Motor neuron (in vitro differentiated cells): ENCODE measurements at regions of chrX and their contacts with region 1.

Region 1: GRCh38 chrX:12894074-12895030 is 12.1 kb upstream of the TLR8 start:
- ATAC-seq: peak in 2 of 8 experiments; percentile 36 to 69
- H3K4me3 ChIP-seq: no peak overlapping the region
- H3K27ac ChIP-seq: no peak overlapping the region
- H3K4me1 ChIP-seq: no peaks in the 10 kb centered on the region

Region 2: DNA sequence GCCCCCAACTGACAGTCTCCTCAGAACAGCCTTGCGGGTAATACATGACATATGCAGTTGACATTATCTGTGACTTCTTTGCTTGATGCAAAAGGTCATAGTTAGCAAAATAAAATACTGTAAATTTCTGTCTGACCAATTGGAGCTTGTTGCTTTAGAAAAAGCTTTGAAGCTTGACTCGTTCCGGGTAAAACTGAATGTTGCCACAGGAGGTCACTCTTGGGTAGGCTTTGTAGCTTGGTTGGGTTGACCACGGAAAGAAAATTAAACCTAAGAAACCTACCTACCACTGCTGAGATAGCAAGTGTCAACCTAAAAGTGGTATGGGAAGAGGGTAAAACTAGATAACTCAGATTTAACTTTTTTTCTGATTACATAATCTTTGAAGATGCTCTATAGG is 79.9 kb before region 1 on chrX:
- in situ Hi-C with region 1: loop called in 1 of 9 experiments (anchors 10 kb)
- ATAC-seq: peak in 4 of 8 experiments; percentile 32 to 59 (median 42)
- H3K4me3 ChIP-seq: no peak overlapping the region
- H3K27ac ChIP-seq: no peak overlapping the region
- H3K4me1 ChIP-seq: no peaks in the 10 kb centered on the region